Activated CD8-positive, alpha-beta T cell treated with anti-CD3 and anti-CD28 coated beads for 36 hours (primary cell): ENCODE measurements at regions of chr9 and their contacts with region 1.

Region 1: DNA sequence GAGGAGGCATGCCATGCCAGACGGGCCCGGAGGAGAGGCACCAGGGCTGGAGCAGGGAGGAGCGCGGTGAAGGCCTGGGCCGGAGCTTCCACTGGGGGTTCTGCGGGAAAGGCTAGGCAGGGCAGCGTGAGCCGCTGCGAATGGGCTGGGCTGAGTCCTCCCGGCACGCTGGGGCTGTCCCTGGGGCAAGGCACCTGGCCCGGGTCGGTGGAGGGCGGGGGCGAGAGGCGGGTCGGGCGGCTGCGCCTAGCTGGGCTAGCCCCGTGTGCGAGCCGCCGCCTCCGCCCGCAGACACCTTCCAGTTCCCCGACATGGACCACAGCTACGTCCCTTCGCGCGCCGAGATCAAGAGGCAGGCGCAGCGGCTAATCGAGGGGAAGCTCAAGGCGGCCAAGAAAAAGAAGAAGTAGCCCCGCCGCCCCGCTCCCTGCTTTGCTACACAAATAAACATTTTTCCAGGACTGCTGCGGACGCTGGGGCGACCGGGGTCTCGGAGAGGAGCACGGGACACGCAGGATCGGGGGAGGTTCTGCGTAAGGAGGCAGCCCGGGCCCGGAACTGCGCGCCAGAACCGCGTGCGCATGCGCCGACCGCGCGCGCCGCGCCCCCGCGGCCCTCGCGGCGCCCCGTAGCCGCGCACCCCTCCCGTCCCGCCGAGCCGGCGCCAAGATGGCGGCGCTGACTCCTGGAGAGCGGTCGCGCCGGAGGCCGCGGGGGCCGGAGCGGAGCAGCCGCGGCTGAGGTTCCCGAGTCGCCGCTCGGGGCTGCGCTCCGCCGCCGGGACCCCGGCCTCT is at the start of gene RABL6:
- DNase-seq: peak; percentile 82
- ATAC-seq: peak; percentile 89
- H3K4me3 Mint-ChIP-seq: peak within 1 kb of the TSS; percentile 89
- H3K27ac Mint-ChIP-seq: peak within 1 kb of the TSS; percentile 95
- H3K4me1 Mint-ChIP-seq: peaks cover 27% of the 10 kb centered on the region
- H3K27me3 Mint-ChIP-seq: no peaks in the 10 kb centered on the region
- CTCF ChIP-seq: no peak
- total RNA-seq, gene RABL6: 85.6 to 86.6 TPM

Region 2: GRCh38 chr9:136742591-136743391 is 64.7 kb before region 1 on chr9 and contains the start of gene LCN10:
- CTCF ChIA-PET with region 1: no interaction called
- POLR2A ChIA-PET with region 1: no interaction called
- intact Hi-C with region 1: loop called (anchors 10 kb)
- DNase-seq: no peak
- ATAC-seq: peak; percentile 4
- H3K4me3 Mint-ChIP-seq: peak within 1 kb of the TSS; percentile 70
- H3K27ac Mint-ChIP-seq: peak within 1 kb of the TSS; percentile 75
- H3K4me1 Mint-ChIP-seq: peaks cover 21% of the 10 kb centered on the region
- H3K27me3 Mint-ChIP-seq: no peaks in the 10 kb centered on the region
- CTCF ChIP-seq: no peak
- total RNA-seq, gene LCN10: 2.6 to 3.2 TPM

Region 3: GRCh38 chr9:136849038-136849959 is 41.8 kb after region 1 on chr9 and contains the start of gene PHPT1:
- CTCF ChIA-PET with region 1: interaction called, 22 read pairs
- POLR2A ChIA-PET with region 1: interaction called, 4 read pairs
- intact Hi-C with region 1: no loop called
- DNase-seq: peak; percentile 98
- ATAC-seq: peak; percentile 92
- H3K4me3 Mint-ChIP-seq: peak within 1 kb of the TSS; percentile 92
- H3K27ac Mint-ChIP-seq: peak within 1 kb of the TSS; percentile 93
- H3K4me1 Mint-ChIP-seq: peaks cover 7% of the 10 kb centered on the region
- H3K27me3 Mint-ChIP-seq: peaks cover 16% of the 10 kb centered on the region
- CTCF ChIP-seq: no peak
- total RNA-seq, gene PHPT1: 123 to 124 TPM